Heart right ventricle (tissue), 16 donors: ENCODE measurements at regions of chr18 and their contacts with region 1.

Region 1: GRCh38 chr18:54444319-54444914 is 86.7 kb downstream of the C18orf54 start:
- DNase-seq: peak; percentile 19 to 20
- ATAC-seq: peak in 7 of 8 donors; percentile 39 to 62 (median 56)
- H3K4me3 ChIP-seq: no peak overlapping the region
- H3K27ac ChIP-seq: no peak overlapping the region
- H3K4me1 ChIP-seq: no peaks in the 10 kb centered on the region
- H3K27me3 ChIP-seq: peaks cover 0 to 17% (median 3%) of the 10 kb centered on the region in 7 donors
- CTCF ChIP-seq: peak; percentile 25 to 81 (median 68)

Region 2: GRCh38 chr18:54558609-54559585 is 114.5 kb after region 1 on chr18:
- intact Hi-C with region 1: no loop called
- DNase-seq: no peak
- ATAC-seq: no peak
- H3K4me3 ChIP-seq: no peak overlapping the region
- H3K27ac ChIP-seq: no peak overlapping the region
- H3K4me1 ChIP-seq: no peaks in the 10 kb centered on the region
- H3K27me3 ChIP-seq: no peaks in the 10 kb centered on the region
- CTCF ChIP-seq: peak; percentile 28 to 72 (median 61)

Region 3: GRCh38 chr18:54671291-54671881 is 227.0 kb after region 1 on chr18:
- intact Hi-C with region 1: loop called in 8 of 10 experiments (anchors 2 to 10 kb)
- DNase-seq: no peak
- ATAC-seq: no peak
- H3K4me3 ChIP-seq: no peak overlapping the region
- H3K27ac ChIP-seq: no peak overlapping the region
- H3K4me1 ChIP-seq: no peaks in the 10 kb centered on the region
- H3K27me3 ChIP-seq: no peaks in the 10 kb centered on the region
- CTCF ChIP-seq: peak; percentile 31 to 73 (median 62)

Region 4: GRCh38 chr18:54679318-54680149 is 235.1 kb after region 1 on chr18:
- intact Hi-C with region 1: loop called in 7 of 10 experiments (anchors 5 to 10 kb)
- DNase-seq: peak in 1 of 2 donors; percentile 14
- ATAC-seq: peak in 4 of 8 donors; percentile 35 to 61 (median 54)
- H3K4me3 ChIP-seq: no peak overlapping the region
- H3K27ac ChIP-seq: no peak overlapping the region
- H3K4me1 ChIP-seq: peaks cover 0 to 3% (median 0%) of the 10 kb centered on the region in 9 donors
- H3K27me3 ChIP-seq: no peaks in the 10 kb centered on the region
- CTCF ChIP-seq: peak in 8 of 9 donors; percentile 29 to 60 (median 48)

Region 5: GRCh38 chr18:54983041-54983686 is 538.7 kb after region 1 on chr18:
- intact Hi-C with region 1: loop called in 8 of 10 experiments (anchors 5 to 10 kb)
- DNase-seq: peak in 1 of 2 donors; percentile 12
- ATAC-seq: peak in 6 of 8 donors; percentile 52 to 70 (median 62)
- H3K4me3 ChIP-seq: no peak overlapping the region
- H3K27ac ChIP-seq: no peak overlapping the region
- H3K4me1 ChIP-seq: no peaks in the 10 kb centered on the region
- H3K27me3 ChIP-seq: no peaks in the 10 kb centered on the region
- CTCF ChIP-seq: peak; percentile 48 to 84 (median 75)